ENCODE measurements at regions of chr11 and their contacts with region 1.

Region 1: GRCh38 chr11:12174477-12175143 is 64.2 kb downstream of the MICAL2 start:
- DNase-seq: no peak
- H3K4me3 Mint-ChIP-seq: peak overlapping the region; percentile 73
- H3K27ac Mint-ChIP-seq: peak overlapping the region; percentile 98
- H3K4me1 Mint-ChIP-seq: peaks cover 73% of the 10 kb centered on the region
- H3K27me3 Mint-ChIP-seq: no peaks in the 10 kb centered on the region

Region 2: GRCh38 chr11:11946180-11946579 is 228.4 kb before region 1 on chr11:
- intact Hi-C with region 1: no loop called
- DNase-seq: no peak
- H3K4me3 Mint-ChIP-seq: no peak overlapping the region
- H3K27ac Mint-ChIP-seq: no peak overlapping the region
- H3K4me1 Mint-ChIP-seq: no peaks in the 10 kb centered on the region
- H3K27me3 Mint-ChIP-seq: no peaks in the 10 kb centered on the region

Region 3: DNA sequence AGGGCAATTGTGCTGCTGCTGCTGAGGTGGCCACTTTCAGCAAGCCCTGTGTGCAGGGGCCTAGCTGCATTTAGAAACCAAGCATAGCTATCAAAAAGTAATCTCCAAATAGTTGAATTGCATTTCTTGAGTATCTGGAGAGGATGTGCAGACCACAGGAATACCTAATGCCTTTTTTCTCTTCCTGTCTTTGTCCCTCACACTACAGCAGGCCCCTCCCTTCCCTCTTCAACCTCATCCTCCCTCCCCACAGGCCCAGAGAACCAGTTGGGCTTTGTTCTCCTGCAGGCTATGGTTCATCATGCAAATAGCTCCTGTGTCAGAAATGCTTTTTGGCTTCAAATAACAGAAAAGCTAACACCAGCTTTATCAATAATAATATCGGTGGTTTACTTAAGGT is 213.9 kb before region 1 on chr11:
- intact Hi-C with region 1: no loop called
- DNase-seq: peak; percentile 31
- H3K4me3 Mint-ChIP-seq: no peak overlapping the region
- H3K27ac Mint-ChIP-seq: peak overlapping the region; percentile 36
- H3K4me1 Mint-ChIP-seq: peaks cover 37% of the 10 kb centered on the region
- H3K27me3 Mint-ChIP-seq: peaks cover 11% of the 10 kb centered on the region

Region 4: DNA sequence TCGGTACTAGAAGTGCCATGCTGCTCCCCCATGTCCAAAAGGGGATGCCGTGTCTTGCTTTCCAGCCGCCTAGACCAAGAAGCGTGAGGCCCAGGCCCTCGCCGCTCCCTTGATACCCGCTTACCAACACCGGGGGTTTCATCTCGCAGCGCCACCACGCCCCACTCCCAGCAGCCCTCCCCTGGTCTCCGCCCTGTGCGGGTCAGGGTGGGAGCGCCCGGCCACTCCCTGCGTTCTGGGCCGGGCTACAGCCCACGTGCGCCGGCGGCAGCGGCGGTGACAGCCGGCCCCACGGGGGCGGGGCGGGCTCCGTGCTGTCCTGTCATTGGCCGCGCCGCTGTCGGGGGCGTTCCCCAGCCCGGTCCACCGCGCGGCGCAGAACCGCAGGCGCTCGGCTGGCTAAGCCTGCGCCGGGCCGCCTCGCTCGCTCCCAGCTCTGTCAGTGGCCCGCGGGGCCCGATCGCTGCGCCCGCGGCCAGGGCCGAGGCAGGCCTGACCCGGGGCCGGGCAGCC is 64.4 kb before region 1 on chr11 and contains the start of gene MICAL2:
- intact Hi-C with region 1: loop called (anchors 2 kb)
- DNase-seq: peak; percentile 88
- H3K4me3 Mint-ChIP-seq: peak within 1 kb of the TSS; percentile 90
- H3K27ac Mint-ChIP-seq: peak within 1 kb of the TSS; percentile 99
- H3K4me1 Mint-ChIP-seq: peaks cover 60% of the 10 kb centered on the region
- H3K27me3 Mint-ChIP-seq: no peaks in the 10 kb centered on the region
- total RNA-seq, gene MICAL2: 736 TPM in 2 replicates

Region 5: GRCh38 chr11:12149672-12150225 is 24.9 kb before region 1 on chr11:
- intact Hi-C with region 1: loop called (anchors 1 kb)
- DNase-seq: peak; percentile 31
- H3K4me3 Mint-ChIP-seq: peak overlapping the region; percentile 43
- H3K27ac Mint-ChIP-seq: peak overlapping the region; percentile 96
- H3K4me1 Mint-ChIP-seq: peaks cover 74% of the 10 kb centered on the region
- H3K27me3 Mint-ChIP-seq: no peaks in the 10 kb centered on the region

Region 6: DNA sequence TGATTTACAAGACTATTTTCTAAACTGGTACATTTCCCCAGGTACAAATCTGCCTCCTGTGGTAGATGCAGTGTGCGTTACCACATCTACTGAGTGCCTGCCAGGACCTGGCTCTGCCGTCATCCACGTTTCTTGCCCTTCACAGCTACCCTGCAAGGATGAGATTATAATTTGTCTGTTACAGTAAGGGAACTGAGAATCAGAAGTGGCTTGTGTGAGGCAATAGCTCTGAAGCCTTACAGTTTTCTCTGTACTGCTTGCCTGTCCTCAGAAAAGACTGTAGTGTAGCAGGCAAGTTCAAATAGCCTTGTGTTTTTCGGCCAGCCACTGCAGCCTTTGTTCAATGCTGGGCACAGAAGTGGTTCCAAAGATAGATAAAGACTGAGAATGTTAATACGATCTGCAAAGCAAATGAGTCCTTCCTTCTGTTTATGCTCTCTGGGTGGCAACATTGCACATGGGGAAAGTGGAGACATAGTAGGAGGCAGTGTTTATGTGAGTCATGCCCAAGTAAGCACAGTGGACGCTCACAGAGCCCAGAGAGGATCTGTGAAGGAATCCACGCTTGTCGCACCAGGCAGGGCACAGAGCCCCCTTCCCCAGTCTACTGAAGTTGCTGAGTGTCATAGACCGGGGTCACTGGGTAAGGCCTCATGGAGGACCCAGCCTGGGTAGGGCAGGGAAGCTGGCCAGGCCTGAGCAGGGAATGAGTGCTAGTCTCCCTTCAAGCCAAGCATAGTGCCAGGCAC is 15.1 kb before region 1 on chr11:
- intact Hi-C with region 1: loop called (anchors 1 kb)
- DNase-seq: no peak
- H3K4me3 Mint-ChIP-seq: peak overlapping the region; percentile 18
- H3K27ac Mint-ChIP-seq: peak overlapping the region; percentile 82
- H3K4me1 Mint-ChIP-seq: peaks cover 88% of the 10 kb centered on the region
- H3K27me3 Mint-ChIP-seq: no peaks in the 10 kb centered on the region

Region 7: GRCh38 chr11:12185914-12186313 is 11.3 kb after region 1 on chr11:
- intact Hi-C with region 1: loop called (anchors 1 kb)
- DNase-seq: no peak
- H3K4me3 Mint-ChIP-seq: no peak overlapping the region
- H3K27ac Mint-ChIP-seq: peak overlapping the region; percentile 44
- H3K4me1 Mint-ChIP-seq: peaks cover 71% of the 10 kb centered on the region
- H3K27me3 Mint-ChIP-seq: no peaks in the 10 kb centered on the region

Region 8: GRCh38 chr11:12224537-12224893 is 49.9 kb after region 1 on chr11:
- intact Hi-C with region 1: loop called (anchors 1 kb)
- DNase-seq: peak; percentile 83
- H3K4me3 Mint-ChIP-seq: peak overlapping the region; percentile 51
- H3K27ac Mint-ChIP-seq: peak overlapping the region; percentile 91
- H3K4me1 Mint-ChIP-seq: peaks cover 54% of the 10 kb centered on the region
- H3K27me3 Mint-ChIP-seq: no peaks in the 10 kb centered on the region

Measured in activated T-helper 2 cell treated with anti-CD3 and anti-CD28 coated beads, Interferon-gamma antibody, Interleukin-2, Interleukin-4, amounts not matched to agents 10 μg/mL and 5 μg/mL and 100 μg/mL, durations not matched to agents 14 hours and 24 hours and 36 hours (primary cell).